Transverse colon (tissue), 4 donors: ENCODE measurements at regions of chr12 and their contacts with region 1.

Region 1: GRCh38 chr12:51156245-51156765 is 16.6 kb downstream of the TFCP2 start:
- DNase-seq: no peak
- H3K4me3 ChIP-seq: no peak overlapping the region
- H3K27ac ChIP-seq: no peak overlapping the region
- H3K4me1 ChIP-seq: peaks cover 0 to 4% (median 0%) of the 10 kb centered on the region in 4 donors
- H3K27me3 ChIP-seq: no peaks in the 10 kb centered on the region
- CTCF ChIP-seq: no peak
- EP300 ChIP-seq: no peak
- POLR2A ChIP-seq: no peak

Region 2: GRCh38 chr12:51172515-51173431 is 16.5 kb after region 1 on chr12 and contains the start of gene TFCP2:
- in situ Hi-C with region 1: no loop called
- intact Hi-C with region 1: loop called (anchors 1 kb)
- DNase-seq: peak; percentile 97
- H3K4me3 ChIP-seq: peak within 1 kb of the TSS; percentile 65 to 86 (median 74)
- H3K27ac ChIP-seq: peak within 1 kb of the TSS; percentile 94 to 99 (median 96)
- H3K4me1 ChIP-seq: peaks cover 0 to 26% (median 17%) of the 10 kb centered on the region in 4 donors
- H3K27me3 ChIP-seq: no peaks in the 10 kb centered on the region
- CTCF ChIP-seq: no peak
- EP300 ChIP-seq: no peak
- POLR2A ChIP-seq: peak; percentile 78
- total RNA-seq, gene TFCP2: 13.5 to 20.5 (median 15.4) TPM

Region 3: GRCh38 chr12:51254592-51254991 is 98.3 kb after region 1 on chr12:
- in situ Hi-C with region 1: loop called in 1 of 4 experiments (anchors 10 kb)
- intact Hi-C with region 1: no loop called
- DNase-seq: no peak
- H3K4me3 ChIP-seq: no peak overlapping the region
- H3K27ac ChIP-seq: no peak overlapping the region
- H3K4me1 ChIP-seq: no peaks in the 10 kb centered on the region
- H3K27me3 ChIP-seq: no peaks in the 10 kb centered on the region
- CTCF ChIP-seq: no peak
- EP300 ChIP-seq: no peak
- POLR2A ChIP-seq: no peak